Caco-2 (cell line): ENCODE measurements at regions of chr15 and their contacts with region 1.

Region 1: GRCh38 chr15:50003786-50004334 is 115.2 kb downstream of the ATP8B4 start:
- DNase-seq: peak; percentile 84 to 87
- H3K4me3 ChIP-seq: no peak overlapping the region
- H3K4me3 Mint-ChIP-seq: no peak overlapping the region
- H3K27ac Mint-ChIP-seq: no peak overlapping the region
- H3K4me1 ChIP-seq: no peaks in the 10 kb centered on the region
- H3K4me1 Mint-ChIP-seq: peaks cover 4% of the 10 kb centered on the region
- H3K27me3 ChIP-seq: no peaks in the 10 kb centered on the region
- H3K27me3 Mint-ChIP-seq: peaks cover 15% of the 10 kb centered on the region
- CTCF ChIP-seq: peak; percentile 79 to 83

Region 2: GRCh38 chr15:49235446-49236124 is 768.3 kb before region 1 on chr15:
- CTCF ChIA-PET with region 1: interaction called, 3 read pairs
- POLR2A ChIA-PET with region 1: no interaction called
- intact Hi-C with region 1: loop called (anchors 2 kb)
- DNase-seq: peak in 1 of 2 experiments; percentile 54
- H3K4me3 ChIP-seq: no peak overlapping the region
- H3K4me3 Mint-ChIP-seq: no peak overlapping the region
- H3K27ac Mint-ChIP-seq: no peak overlapping the region
- H3K4me1 ChIP-seq: peaks cover 8% of the 10 kb centered on the region
- H3K4me1 Mint-ChIP-seq: peaks cover 7% of the 10 kb centered on the region
- H3K27me3 ChIP-seq: no peaks in the 10 kb centered on the region
- H3K27me3 Mint-ChIP-seq: no peaks in the 10 kb centered on the region
- CTCF ChIP-seq: peak; percentile 49 to 56

Region 3: GRCh38 chr15:49471733-49472132 is 532.1 kb before region 1 on chr15:
- CTCF ChIA-PET with region 1: no interaction called
- POLR2A ChIA-PET with region 1: no interaction called
- intact Hi-C with region 1: loop called (anchors 10 kb)
- DNase-seq: no peak
- H3K4me3 ChIP-seq: no peak overlapping the region
- H3K4me3 Mint-ChIP-seq: no peak overlapping the region
- H3K27ac Mint-ChIP-seq: no peak overlapping the region
- H3K4me1 ChIP-seq: no peaks in the 10 kb centered on the region; the same call in 1 of the 2 replicates
- H3K4me1 Mint-ChIP-seq: no peaks in the 10 kb centered on the region
- H3K27me3 ChIP-seq: no peaks in the 10 kb centered on the region
- H3K27me3 Mint-ChIP-seq: peaks cover 10% of the 10 kb centered on the region
- CTCF ChIP-seq: no peak

Region 4: GRCh38 chr15:49876401-49877038 is 127.3 kb before region 1 on chr15:
- CTCF ChIA-PET with region 1: interaction called, 24 read pairs
- POLR2A ChIA-PET with region 1: no interaction called
- intact Hi-C with region 1: loop called (anchors 1 kb)
- DNase-seq: peak in 1 of 2 experiments; percentile 32
- H3K4me3 ChIP-seq: no peak overlapping the region
- H3K4me3 Mint-ChIP-seq: no peak overlapping the region
- H3K27ac Mint-ChIP-seq: no peak overlapping the region
- H3K4me1 ChIP-seq: no peaks in the 10 kb centered on the region
- H3K4me1 Mint-ChIP-seq: peaks cover 7% of the 10 kb centered on the region
- H3K27me3 ChIP-seq: no peaks in the 10 kb centered on the region
- H3K27me3 Mint-ChIP-seq: peaks cover 6% of the 10 kb centered on the region
- CTCF ChIP-seq: peak; percentile 36 to 40

Region 5: GRCh38 chr15:49901996-49902684 is 101.7 kb before region 1 on chr15:
- CTCF ChIA-PET with region 1: no interaction called
- POLR2A ChIA-PET with region 1: no interaction called
- intact Hi-C with region 1: loop called (anchors 10 kb)
- DNase-seq: no peak
- H3K4me3 ChIP-seq: no peak overlapping the region
- H3K4me3 Mint-ChIP-seq: no peak overlapping the region
- H3K27ac Mint-ChIP-seq: no peak overlapping the region
- H3K4me1 ChIP-seq: no peaks in the 10 kb centered on the region
- H3K4me1 Mint-ChIP-seq: no peaks in the 10 kb centered on the region
- H3K27me3 ChIP-seq: no peaks in the 10 kb centered on the region
- H3K27me3 Mint-ChIP-seq: peaks cover 7% of the 10 kb centered on the region
- CTCF ChIP-seq: no peak

Region 6: DNA sequence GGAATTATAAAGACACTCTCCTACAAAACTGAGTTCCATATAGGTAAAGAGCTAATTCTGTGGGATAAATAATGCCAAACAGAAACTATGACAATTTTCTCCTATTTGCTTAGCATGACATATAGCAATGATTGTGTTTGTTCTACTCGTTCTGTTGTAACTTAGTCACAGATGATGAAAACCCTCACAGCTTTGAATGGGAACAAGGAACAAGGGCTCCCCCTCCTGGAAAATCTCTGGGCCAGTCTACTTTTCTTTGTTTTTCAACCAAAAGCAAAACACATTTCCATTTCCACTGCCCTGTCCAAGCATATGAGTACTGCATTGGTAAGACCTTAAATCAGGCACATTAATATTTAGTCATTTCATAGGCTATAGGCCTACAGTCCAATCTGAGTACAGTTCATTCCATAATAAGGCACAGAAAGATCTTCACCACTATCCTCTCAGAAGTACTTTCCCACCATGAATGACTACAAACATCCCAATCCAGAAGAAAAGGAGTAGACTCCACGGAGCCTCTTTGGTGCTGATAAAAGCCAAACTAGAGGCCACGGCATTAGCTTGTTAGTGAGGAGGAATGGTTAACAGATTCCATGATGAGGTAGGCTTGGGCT is 48.1 kb after region 1 on chr15:
- CTCF ChIA-PET with region 1: no interaction called
- POLR2A ChIA-PET with region 1: no interaction called
- intact Hi-C with region 1: loop called (anchors 1 kb)
- DNase-seq: peak; percentile 45 to 71
- H3K4me3 ChIP-seq: no peak overlapping the region
- H3K4me3 Mint-ChIP-seq: no peak overlapping the region
- H3K27ac Mint-ChIP-seq: no peak overlapping the region
- H3K4me1 ChIP-seq: no peaks in the 10 kb centered on the region
- H3K4me1 Mint-ChIP-seq: no peaks in the 10 kb centered on the region
- H3K27me3 ChIP-seq: no peaks in the 10 kb centered on the region
- H3K27me3 Mint-ChIP-seq: no peaks in the 10 kb centered on the region
- CTCF ChIP-seq: peak; percentile 61 to 65